CD8-positive, alpha-beta T cell (primary cell): ENCODE measurements at regions of chr19 and their contacts with region 1.

Region 1: GRCh38 chr19:16216744-16217670 is 19.3 kb downstream of the AP1M1 start:
- DNase-seq: peak in 8 of 9 experiments; percentile 28 to 83 (median 59)
- ATAC-seq: peak; percentile 86
- H3K4me3 ChIP-seq: peak overlapping the region in 1 of 2 experiments; percentile 29
- H3K4me3 Mint-ChIP-seq: peak overlapping the region; percentile 80
- H3K27ac ChIP-seq: peak overlapping the region; percentile 44
- H3K27ac Mint-ChIP-seq: peak overlapping the region; percentile 95
- H3K4me1 ChIP-seq: peaks cover 66% of the 10 kb centered on the region
- H3K4me1 Mint-ChIP-seq: peaks cover 65% of the 10 kb centered on the region
- H3K27me3 ChIP-seq: no peaks in the 10 kb centered on the region
- H3K27me3 Mint-ChIP-seq: no peaks in the 10 kb centered on the region
- CTCF ChIP-seq: no peak

Region 2: DNA sequence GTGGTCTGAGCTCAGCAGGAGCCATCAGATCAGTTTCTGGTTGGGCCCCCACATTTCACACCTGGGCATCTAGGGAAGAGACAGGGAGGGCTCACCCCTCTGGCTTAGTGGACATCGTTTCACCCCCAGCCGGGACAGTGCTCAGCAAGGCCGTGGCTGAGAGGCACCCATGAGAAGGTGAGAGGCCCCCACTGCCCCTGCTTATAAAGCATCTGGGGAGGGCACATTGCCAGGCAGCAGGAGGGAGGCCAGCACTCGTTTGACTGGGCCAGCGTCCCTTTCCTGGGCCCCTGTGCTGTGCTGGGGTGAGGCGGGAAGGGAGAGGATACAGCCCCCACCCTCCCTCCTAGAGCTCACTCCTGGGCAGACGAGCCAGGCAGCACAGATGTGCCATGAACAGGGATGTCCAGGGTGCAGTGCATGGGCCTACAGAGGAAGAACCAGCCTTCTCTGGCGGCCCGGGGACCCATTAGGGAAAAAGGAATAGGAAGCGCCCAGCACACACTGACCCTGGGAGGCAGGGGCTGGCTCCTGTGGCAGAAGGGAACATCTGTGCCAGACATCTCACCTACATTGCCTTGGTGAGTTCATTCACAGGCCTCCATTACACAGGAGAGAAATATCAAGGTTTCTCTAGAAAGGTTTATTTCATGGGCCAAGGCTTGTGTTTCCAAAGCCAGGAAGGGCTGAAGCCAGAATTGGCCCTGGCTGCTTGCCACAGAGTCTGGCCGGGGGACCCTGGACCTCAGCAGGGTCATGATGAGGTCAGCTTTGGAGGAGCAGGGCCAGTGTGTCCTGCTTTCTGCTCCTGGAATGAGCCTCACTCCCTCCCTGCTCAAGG is 11.6 kb before region 1 on chr19:
- CTCF ChIA-PET with region 1: interaction called, 3 read pairs
- POLR2A ChIA-PET with region 1: interaction called, 4 read pairs
- intact Hi-C with region 1: loop called in 1 of 2 experiments (anchors 1 kb)
- DNase-seq: peak in 2 of 9 experiments; percentile 1 to 3
- ATAC-seq: no peak
- H3K4me3 ChIP-seq: no peak overlapping the region
- H3K4me3 Mint-ChIP-seq: no peak overlapping the region
- H3K27ac ChIP-seq: no peak overlapping the region
- H3K27ac Mint-ChIP-seq: peak overlapping the region; percentile 37
- H3K4me1 ChIP-seq: peaks cover 89% of the 10 kb centered on the region
- H3K4me1 Mint-ChIP-seq: peaks cover 73% of the 10 kb centered on the region
- H3K27me3 ChIP-seq: no peaks in the 10 kb centered on the region
- H3K27me3 Mint-ChIP-seq: no peaks in the 10 kb centered on the region
- CTCF ChIP-seq: no peak

Region 3: GRCh38 chr19:16235811-16236652 is 19.0 kb after region 1 on chr19:
- CTCF ChIA-PET with region 1: interaction called, 4 read pairs
- POLR2A ChIA-PET with region 1: interaction called, 3 read pairs
- intact Hi-C with region 1: loop called (anchors 2 kb)
- DNase-seq: peak in 2 of 9 experiments; percentile 48 to 63
- ATAC-seq: peak; percentile 64
- H3K4me3 ChIP-seq: no peak overlapping the region
- H3K4me3 Mint-ChIP-seq: peak overlapping the region; percentile 40
- H3K27ac ChIP-seq: peak overlapping the region; percentile 31 to 33
- H3K27ac Mint-ChIP-seq: peak overlapping the region; percentile 96
- H3K4me1 ChIP-seq: peaks cover 63% of the 10 kb centered on the region
- H3K4me1 Mint-ChIP-seq: peaks cover 58% of the 10 kb centered on the region
- H3K27me3 ChIP-seq: no peaks in the 10 kb centered on the region
- H3K27me3 Mint-ChIP-seq: no peaks in the 10 kb centered on the region
- CTCF ChIP-seq: no peak